ENCODE measurements at regions of chr20 and their contacts with region 1.

Region 1: GRCh38 chr20:48359697-48360336 is 468.0 kb downstream of the PREX1 start:
- DNase-seq: peak; percentile 85
- ATAC-seq: peak; percentile 95
- H3K4me3 ChIP-seq: peak overlapping the region; percentile 75; the same call in 1 of the 2 replicates
- H3K27ac ChIP-seq: peak overlapping the region; percentile 59
- H3K4me1 ChIP-seq: peaks cover 34% of the 10 kb centered on the region
- H3K27me3 ChIP-seq: no peaks in the 10 kb centered on the region
- CTCF ChIP-seq: no peak
- EP300 ChIP-seq: 0 out of 4 replicates have a peak, but pooled peaks of 1 of the 2 experiments have one; percentile 17
- POLR2A ChIP-seq: peak; percentile 35; the same call in 1 of the 2 replicates
- RAD21 ChIP-seq: no peak

Region 2: DNA sequence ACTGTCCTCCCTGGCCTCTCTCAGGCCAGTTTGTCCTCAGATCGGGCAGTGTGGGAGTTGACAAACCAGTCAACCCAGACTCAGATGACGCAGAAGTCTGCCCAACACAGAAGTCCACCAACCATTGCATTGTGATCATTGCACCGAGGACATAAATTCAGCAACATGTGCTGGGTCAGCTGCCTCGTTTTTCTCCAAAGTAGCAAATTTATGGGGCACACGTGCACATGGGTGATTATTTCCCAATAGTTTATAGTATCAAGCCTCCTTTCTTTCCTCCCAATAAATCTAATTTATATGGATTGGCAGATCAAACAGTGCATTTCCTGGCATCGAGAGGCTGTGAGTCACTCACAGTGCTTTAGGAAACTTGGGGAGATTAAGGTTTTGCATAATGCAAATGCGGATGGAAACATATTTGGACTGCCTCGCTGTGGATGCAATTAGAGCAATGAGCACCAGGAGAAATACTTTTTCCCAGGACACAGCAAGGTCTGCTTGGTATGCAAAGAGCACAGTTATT is 160.8 kb before region 1 on chr20:
- CTCF ChIA-PET with region 1: no interaction called
- POLR2A ChIA-PET with region 1: no interaction called
- RAD21 ChIA-PET with region 1: no interaction called
- SMC1A ChIA-PET with region 1: no interaction called
- in situ Hi-C with region 1: no loop called
- intact Hi-C with region 1: no loop called
- DNase-seq: no peak
- ATAC-seq: no peak
- H3K4me3 ChIP-seq: no peak overlapping the region
- H3K27ac ChIP-seq: no peak overlapping the region
- H3K4me1 ChIP-seq: no peaks in the 10 kb centered on the region
- H3K27me3 ChIP-seq: no peaks in the 10 kb centered on the region; a peak in 2 of 4 replicates
- CTCF ChIP-seq: no peak
- EP300 ChIP-seq: no peak
- POLR2A ChIP-seq: no peak
- RAD21 ChIP-seq: no peak

Region 3: GRCh38 chr20:48339190-48340062 is 20.4 kb before region 1 on chr20:
- CTCF ChIA-PET with region 1: interaction called, 9 read pairs
- POLR2A ChIA-PET with region 1: interaction called, 11 read pairs
- RAD21 ChIA-PET with region 1: interaction called, 20 read pairs
- SMC1A ChIA-PET with region 1: interaction called, 19 read pairs
- in situ Hi-C with region 1: no loop called
- intact Hi-C with region 1: no loop called
- DNase-seq: peak; percentile 63
- ATAC-seq: peak; percentile 76
- H3K4me3 ChIP-seq: no peak overlapping the region
- H3K27ac ChIP-seq: peak overlapping the region; percentile 67
- H3K4me1 ChIP-seq: peaks cover 22% of the 10 kb centered on the region
- H3K27me3 ChIP-seq: no peaks in the 10 kb centered on the region
- CTCF ChIP-seq: no peak
- EP300 ChIP-seq: peak; percentile 46 to 79; a peak in 3 of 4 replicates
- POLR2A ChIP-seq: no peak
- RAD21 ChIP-seq: peak; percentile 6; the same call in 1 of the 2 replicates

Region 4: GRCh38 chr20:48489656-48490055 is 129.8 kb after region 1 on chr20:
- CTCF ChIA-PET with region 1: no interaction called
- POLR2A ChIA-PET with region 1: no interaction called
- RAD21 ChIA-PET with region 1: interaction called, 3 read pairs
- SMC1A ChIA-PET with region 1: interaction called, 3 read pairs
- in situ Hi-C with region 1: no loop called
- intact Hi-C with region 1: loop called (anchors 10 kb)
- DNase-seq: no peak
- ATAC-seq: peak; percentile 10
- H3K4me3 ChIP-seq: no peak overlapping the region
- H3K27ac ChIP-seq: no peak overlapping the region
- H3K4me1 ChIP-seq: peaks cover 12% of the 10 kb centered on the region
- H3K27me3 ChIP-seq: no peaks in the 10 kb centered on the region
- CTCF ChIP-seq: no peak
- EP300 ChIP-seq: no peak
- POLR2A ChIP-seq: no peak
- RAD21 ChIP-seq: no peak

Region 5: GRCh38 chr20:48722737-48723191 is 362.9 kb after region 1 on chr20:
- CTCF ChIA-PET with region 1: no interaction called
- POLR2A ChIA-PET with region 1: no interaction called
- RAD21 ChIA-PET with region 1: no interaction called
- SMC1A ChIA-PET with region 1: no interaction called
- in situ Hi-C with region 1: no loop called
- intact Hi-C with region 1: no loop called
- DNase-seq: no peak
- ATAC-seq: peak; percentile 14
- H3K4me3 ChIP-seq: no peak overlapping the region
- H3K27ac ChIP-seq: peak overlapping the region; percentile 89
- H3K4me1 ChIP-seq: peaks cover 63% of the 10 kb centered on the region
- H3K27me3 ChIP-seq: no peaks in the 10 kb centered on the region
- CTCF ChIP-seq: 0 out of 6 replicates have a peak, but pooled peaks of 1 of the 3 experiments have one; percentile 3
- EP300 ChIP-seq: no peak
- POLR2A ChIP-seq: no peak
- RAD21 ChIP-seq: no peak